ENCODE measurements at regions of chr2 and their contacts with region 1.

Region 1: GRCh38 chr2:174771631-174772471 is 7.6 kb upstream of the CHRNA1 start:
- DNase-seq: peak; percentile 69 to 79
- H3K4me3 ChIP-seq: no peak overlapping the region
- H3K27ac ChIP-seq: peak overlapping the region in 1 of 2 donors; percentile 21
- H3K4me1 ChIP-seq: peaks cover 0 to 16% (median 10%) of the 10 kb centered on the region in 4 donors
- H3K27me3 ChIP-seq: no peaks in the 10 kb centered on the region
- CTCF ChIP-seq: peak; percentile 72 to 82

Region 2: GRCh38 chr2:174985630-174986029 is 213.8 kb after region 1 on chr2:
- intact Hi-C with region 1: loop called (anchors 2 kb)
- DNase-seq: no peak
- H3K4me3 ChIP-seq: no peak overlapping the region
- H3K27ac ChIP-seq: no peak overlapping the region
- H3K4me1 ChIP-seq: peaks cover 0 to 4% (median 0%) of the 10 kb centered on the region in 4 donors
- H3K27me3 ChIP-seq: no peaks in the 10 kb centered on the region
- CTCF ChIP-seq: peak; percentile 37 to 45

Measured in tibial artery (tissue), 4 donors.